MCF 10A (cell line): ENCODE measurements at regions of chr4 and their contacts with region 1.

Region 1: DNA sequence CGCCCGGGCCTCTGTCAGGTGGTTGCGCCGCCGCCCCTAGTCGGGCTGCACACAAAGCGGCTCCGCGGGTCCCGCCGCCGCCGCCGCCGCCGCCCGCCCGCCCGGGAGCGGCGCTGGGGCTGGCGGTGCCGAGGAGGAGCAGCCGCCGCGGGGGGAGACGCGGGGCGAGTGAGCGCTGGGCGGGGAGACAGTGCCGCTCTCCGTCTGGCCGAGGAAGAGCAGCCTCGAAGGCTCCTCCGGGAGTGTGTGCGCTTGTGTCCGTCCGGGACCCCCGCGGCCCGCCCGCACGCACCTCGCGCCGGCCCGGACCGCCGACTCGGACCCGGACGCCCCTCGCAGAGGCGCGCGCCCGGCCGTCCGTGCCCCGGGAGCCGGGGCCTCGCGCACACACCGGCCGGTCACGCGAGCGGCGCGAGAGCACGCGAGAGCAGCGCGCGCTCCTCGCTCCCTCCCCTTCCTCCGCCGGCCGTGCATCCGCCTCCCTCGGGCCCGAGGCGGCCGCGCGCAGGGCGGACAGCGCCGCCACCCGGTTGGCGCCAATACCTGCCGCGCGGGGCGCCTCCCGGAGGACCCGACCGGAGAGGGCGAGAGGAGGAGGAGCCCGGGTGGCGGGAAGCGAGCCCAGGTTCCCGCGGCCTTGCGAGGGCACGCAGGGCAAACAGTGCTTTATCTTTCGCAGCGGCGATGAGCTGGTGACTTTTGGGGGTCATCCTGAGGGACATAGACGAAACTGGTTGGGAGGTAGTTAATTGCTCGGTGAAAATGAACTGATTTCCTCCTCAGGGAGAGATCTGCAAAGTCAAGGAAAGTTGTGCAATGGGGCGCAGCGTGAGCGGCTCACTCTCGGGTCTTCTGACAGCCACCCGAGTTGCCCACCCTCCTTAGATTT is at the start of gene PDS5A:
- DNase-seq: peak; percentile 91
- H3K4me3 Mint-ChIP-seq: peak within 1 kb of the TSS; percentile 82
- H3K27ac Mint-ChIP-seq: peak within 1 kb of the TSS; percentile 83
- H3K4me1 Mint-ChIP-seq: peaks cover 6% of the 10 kb centered on the region
- H3K27me3 Mint-ChIP-seq: no peaks in the 10 kb centered on the region
- CTCF ChIP-seq: peak; percentile 83
- total RNA-seq, gene PDS5A: 86.8 and 95.2 TPM in 2 replicates

Region 2: DNA sequence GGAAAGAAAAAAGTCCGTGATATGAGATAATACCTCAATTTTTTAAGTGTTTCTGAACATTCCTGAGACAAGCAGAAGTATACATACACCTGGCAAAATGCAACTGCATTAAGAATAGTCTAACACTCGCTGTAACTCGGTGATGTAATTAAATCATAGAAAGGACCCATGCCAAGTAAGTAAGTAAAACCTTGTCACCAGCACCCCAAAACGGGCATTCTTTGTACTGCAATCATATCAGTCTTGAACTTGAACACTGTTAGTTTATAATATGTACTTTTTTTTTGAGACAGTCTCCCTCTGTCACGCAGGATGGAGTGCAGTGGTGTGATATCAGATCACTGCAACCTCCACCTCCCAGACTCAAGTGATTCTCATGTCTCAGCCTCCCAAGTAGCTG is 386.4 kb before region 1 on chr4:
- CTCF ChIA-PET with region 1: no interaction called
- POLR2A ChIA-PET with region 1: no interaction called
- intact Hi-C with region 1: loop called (anchors 1 kb)
- DNase-seq: peak; percentile 68
- H3K4me3 Mint-ChIP-seq: no peak overlapping the region
- H3K27ac Mint-ChIP-seq: no peak overlapping the region
- H3K4me1 Mint-ChIP-seq: no peaks in the 10 kb centered on the region
- H3K27me3 Mint-ChIP-seq: no peaks in the 10 kb centered on the region
- CTCF ChIP-seq: peak; percentile 43

Region 3: GRCh38 chr4:39994406-39994805 is 16.7 kb after region 1 on chr4:
- CTCF ChIA-PET with region 1: interaction called, 12 read pairs
- POLR2A ChIA-PET with region 1: interaction called, 4 read pairs
- intact Hi-C with region 1: no loop called
- DNase-seq: no peak
- H3K4me3 Mint-ChIP-seq: no peak overlapping the region
- H3K27ac Mint-ChIP-seq: no peak overlapping the region
- H3K4me1 Mint-ChIP-seq: no peaks in the 10 kb centered on the region
- H3K27me3 Mint-ChIP-seq: no peaks in the 10 kb centered on the region
- CTCF ChIP-seq: no peak

Region 4: GRCh38 chr4:40020221-40020943 is 42.6 kb after region 1 on chr4:
- CTCF ChIA-PET with region 1: interaction called, 4 read pairs
- POLR2A ChIA-PET with region 1: no interaction called
- intact Hi-C with region 1: loop called (anchors 1 kb)
- DNase-seq: no peak
- H3K4me3 Mint-ChIP-seq: no peak overlapping the region
- H3K27ac Mint-ChIP-seq: no peak overlapping the region
- H3K4me1 Mint-ChIP-seq: peaks cover 6% of the 10 kb centered on the region
- H3K27me3 Mint-ChIP-seq: no peaks in the 10 kb centered on the region
- CTCF ChIP-seq: no peak

Region 5: DNA sequence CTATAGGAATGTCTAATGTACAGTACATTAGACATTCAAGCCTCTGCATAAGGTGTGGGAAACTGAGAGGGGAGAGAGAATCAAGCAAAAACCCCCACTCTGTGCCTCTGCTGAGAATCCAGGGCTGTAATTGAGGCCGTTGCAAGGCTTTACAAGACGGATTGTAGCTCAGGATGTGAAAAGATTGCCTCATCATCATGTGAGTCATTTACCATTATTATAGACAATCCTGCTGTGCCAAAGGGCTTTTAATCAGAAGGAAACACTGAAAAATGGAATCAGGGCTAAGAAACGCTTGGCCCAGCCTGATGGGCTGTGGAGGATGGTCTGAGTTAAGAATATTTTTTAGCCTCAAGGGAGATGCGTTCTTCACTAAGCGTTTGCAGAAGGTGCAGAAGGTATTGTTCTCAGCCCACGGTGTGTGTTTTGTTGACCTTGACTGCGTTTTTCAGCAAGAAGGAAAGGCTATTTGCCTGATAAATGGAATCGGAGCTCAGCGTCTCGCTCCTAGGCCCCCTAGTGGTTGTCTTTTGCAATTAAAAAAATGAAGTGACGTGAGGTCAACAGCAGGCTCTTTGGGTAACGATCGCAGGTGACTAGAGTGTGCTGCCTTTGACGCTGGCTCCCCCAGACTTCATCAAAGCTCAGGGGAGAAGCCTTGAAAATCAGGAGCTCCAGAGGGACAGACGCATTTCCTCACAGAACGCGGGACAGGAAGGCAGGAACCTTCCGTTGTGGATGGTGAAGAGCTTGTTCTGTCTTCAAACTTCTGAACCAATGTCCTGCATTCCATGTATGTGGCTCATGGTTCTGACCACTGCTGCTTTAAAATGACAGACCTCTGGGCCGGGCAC is 339.3 kb after region 1 on chr4:
- CTCF ChIA-PET with region 1: interaction called, 3 read pairs
- POLR2A ChIA-PET with region 1: interaction called, 4 read pairs
- intact Hi-C with region 1: loop called (anchors 5 kb)
- DNase-seq: peak; percentile 95
- H3K4me3 Mint-ChIP-seq: peak overlapping the region; percentile 85
- H3K27ac Mint-ChIP-seq: peak overlapping the region; percentile 100
- H3K4me1 Mint-ChIP-seq: peaks cover 55% of the 10 kb centered on the region
- H3K27me3 Mint-ChIP-seq: no peaks in the 10 kb centered on the region
- CTCF ChIP-seq: peak; percentile 61